A549 (cell line): ENCODE measurements at regions of chr5 and their contacts with region 1.

Region 1: DNA sequence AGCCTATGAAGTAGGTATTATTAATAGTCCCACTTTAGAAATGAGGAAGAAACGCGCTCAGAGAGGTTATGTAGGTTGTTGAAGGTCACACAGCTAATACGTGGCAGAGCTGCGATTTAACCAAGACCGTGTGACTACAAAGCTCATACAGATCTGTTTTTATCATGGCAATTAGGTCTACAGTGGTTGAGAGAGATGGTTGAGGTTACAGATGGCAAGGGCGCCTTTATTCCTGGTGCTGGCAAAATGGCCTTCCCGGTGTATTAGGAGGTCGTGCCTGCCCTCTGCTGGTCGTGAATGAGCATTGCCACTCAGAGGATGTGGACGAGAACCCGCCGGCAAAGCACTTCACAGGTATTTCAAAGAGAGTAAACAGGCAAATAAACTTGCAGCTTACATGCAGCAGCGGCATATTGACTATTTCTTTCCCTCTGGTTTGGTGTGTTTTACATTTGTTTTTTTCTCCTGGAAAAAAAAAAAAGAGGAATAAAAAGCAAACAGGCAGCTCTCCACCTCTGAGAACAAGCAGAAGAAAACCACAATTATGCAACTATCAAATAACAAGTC is 65.3 kb upstream of the EGFLAM start:
- DNase-seq: peak; percentile 62 to 74
- ATAC-seq: peak; percentile 72 to 91; a peak in 4 of 6 replicates
- H3K4me3 ChIP-seq: no peak overlapping the region
- H3K27ac ChIP-seq: no peak overlapping the region
- H3K4me1 ChIP-seq: no peaks in the 10 kb centered on the region
- CTCF ChIP-seq: peak; percentile 87
- EP300 ChIP-seq: no peak
- POLR2A ChIP-seq: no peak
- RAD21 ChIP-seq: peak; percentile 89 to 91

Region 2: GRCh38 chr5:37831821-37832534 is 361.1 kb before region 1 on chr5:
- CTCF ChIA-PET with region 1: interaction called, 19 read pairs
- POLR2A ChIA-PET with region 1: no interaction called
- DNase-seq: no peak
- ATAC-seq: no peak
- H3K4me3 ChIP-seq: no peak overlapping the region
- H3K27ac ChIP-seq: no peak overlapping the region
- H3K4me1 ChIP-seq: no peaks in the 10 kb centered on the region
- CTCF ChIP-seq: no peak
- EP300 ChIP-seq: no peak
- POLR2A ChIP-seq: no peak
- RAD21 ChIP-seq: no peak

Region 3: GRCh38 chr5:38157024-38157423 is 36.1 kb before region 1 on chr5:
- CTCF ChIA-PET with region 1: interaction called, 12 read pairs
- POLR2A ChIA-PET with region 1: no interaction called
- DNase-seq: no peak
- ATAC-seq: no peak
- H3K4me3 ChIP-seq: no peak overlapping the region
- H3K27ac ChIP-seq: no peak overlapping the region
- H3K4me1 ChIP-seq: no peaks in the 10 kb centered on the region
- CTCF ChIP-seq: no peak
- EP300 ChIP-seq: no peak
- POLR2A ChIP-seq: no peak
- RAD21 ChIP-seq: no peak

Region 4: GRCh38 chr5:38182991-38183390 is 10.1 kb before region 1 on chr5:
- CTCF ChIA-PET with region 1: interaction called, 31 read pairs
- POLR2A ChIA-PET with region 1: no interaction called
- DNase-seq: no peak
- ATAC-seq: no peak; a peak in 1 of 6 replicates
- H3K4me3 ChIP-seq: no peak overlapping the region
- H3K27ac ChIP-seq: no peak overlapping the region
- H3K4me1 ChIP-seq: no peaks in the 10 kb centered on the region
- CTCF ChIP-seq: no peak
- EP300 ChIP-seq: no peak
- POLR2A ChIP-seq: no peak
- RAD21 ChIP-seq: no peak

Region 5: GRCh38 chr5:38497946-38498345 is 304.8 kb after region 1 on chr5:
- CTCF ChIA-PET with region 1: no interaction called
- POLR2A ChIA-PET with region 1: no interaction called
- DNase-seq: peak in 1 of 2 experiments; percentile 25
- ATAC-seq: peak in 1 of 2 experiments; percentile 77; a peak in 3 of 6 replicates
- H3K4me3 ChIP-seq: no peak overlapping the region
- H3K27ac ChIP-seq: no peak overlapping the region
- H3K4me1 ChIP-seq: no peaks in the 10 kb centered on the region
- CTCF ChIP-seq: peak; percentile 28; the same call in 2 of the 3 replicates
- EP300 ChIP-seq: no peak
- POLR2A ChIP-seq: no peak
- RAD21 ChIP-seq: peak; percentile 39 to 50; a peak in 4 of 5 replicates